MCF 10A (cell line): ENCODE measurements at regions of chr3 and their contacts with region 1.

Region 1: DNA sequence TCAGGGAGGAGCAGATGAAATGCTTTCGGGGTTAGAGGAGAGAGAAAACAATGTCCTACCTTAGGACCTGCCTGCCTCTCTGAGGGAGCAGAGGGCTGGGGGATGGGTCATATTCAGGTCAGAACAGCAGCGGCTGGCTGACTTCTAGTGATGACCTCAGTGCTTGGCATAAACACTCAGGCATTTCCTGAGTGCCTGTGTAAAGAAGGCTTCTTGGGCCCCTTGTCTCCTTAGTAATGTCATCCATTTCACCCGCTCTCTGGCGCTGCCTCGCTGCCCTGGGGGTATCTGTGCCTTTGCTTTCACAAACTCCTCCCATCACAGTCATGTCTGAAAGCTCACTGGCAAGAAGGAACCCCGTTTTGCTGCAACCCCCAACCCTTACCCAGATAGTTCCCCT is 82.9 kb upstream of the GSK3B start:
- DNase-seq: peak; percentile 93
- H3K4me3 Mint-ChIP-seq: peak overlapping the region; percentile 65
- H3K27ac Mint-ChIP-seq: peak overlapping the region; percentile 96
- H3K4me1 Mint-ChIP-seq: peaks cover 34% of the 10 kb centered on the region
- H3K27me3 Mint-ChIP-seq: no peaks in the 10 kb centered on the region
- CTCF ChIP-seq: no peak

Region 2: GRCh38 chr3:120102674-120103073 is 74.5 kb before region 1 on chr3:
- CTCF ChIA-PET with region 1: interaction called, 11 read pairs
- POLR2A ChIA-PET with region 1: interaction called, 4 read pairs
- intact Hi-C with region 1: no loop called
- DNase-seq: peak; percentile 88
- H3K4me3 Mint-ChIP-seq: no peak overlapping the region
- H3K27ac Mint-ChIP-seq: peak overlapping the region; percentile 82
- H3K4me1 Mint-ChIP-seq: peaks cover 23% of the 10 kb centered on the region
- H3K27me3 Mint-ChIP-seq: no peaks in the 10 kb centered on the region
- CTCF ChIP-seq: no peak